Activated T-helper 1 cell treated with anti-CD3 and anti-CD28 coated beads, Interleukin-12 subunit alpha, Interleukin-12 subunit beta, Interleukin-2, Interleukin-4 antibody, amounts not matched to agents 30 ng/mL and 10 ng/mL and 1 ng/mL, durations not matched to agents 14 hours and 24 hours and 36 hours (primary cell): ENCODE measurements at regions of chr3 and their contacts with region 1.

Region 1: GRCh38 chr3:190424478-190425439 is 24.9 kb downstream of the TMEM207 start:
- DNase-seq: no peak
- H3K4me3 Mint-ChIP-seq: no peak overlapping the region
- H3K27ac Mint-ChIP-seq: no peak overlapping the region
- H3K4me1 Mint-ChIP-seq: no peaks in the 10 kb centered on the region
- H3K27me3 Mint-ChIP-seq: peaks cover 6% of the 10 kb centered on the region

Region 2: GRCh38 chr3:189967254-189967865 is 457.4 kb before region 1 on chr3:
- intact Hi-C with region 1: loop called (anchors 1 kb)
- DNase-seq: no peak
- H3K4me3 Mint-ChIP-seq: no peak overlapping the region
- H3K27ac Mint-ChIP-seq: no peak overlapping the region
- H3K4me1 Mint-ChIP-seq: peaks cover 8% of the 10 kb centered on the region
- H3K27me3 Mint-ChIP-seq: peaks cover 7% of the 10 kb centered on the region

Region 3: GRCh38 chr3:190064112-190064511 is 360.6 kb before region 1 on chr3:
- intact Hi-C with region 1: no loop called
- DNase-seq: no peak
- H3K4me3 Mint-ChIP-seq: no peak overlapping the region
- H3K27ac Mint-ChIP-seq: no peak overlapping the region
- H3K4me1 Mint-ChIP-seq: no peaks in the 10 kb centered on the region
- H3K27me3 Mint-ChIP-seq: no peaks in the 10 kb centered on the region

Region 4: DNA sequence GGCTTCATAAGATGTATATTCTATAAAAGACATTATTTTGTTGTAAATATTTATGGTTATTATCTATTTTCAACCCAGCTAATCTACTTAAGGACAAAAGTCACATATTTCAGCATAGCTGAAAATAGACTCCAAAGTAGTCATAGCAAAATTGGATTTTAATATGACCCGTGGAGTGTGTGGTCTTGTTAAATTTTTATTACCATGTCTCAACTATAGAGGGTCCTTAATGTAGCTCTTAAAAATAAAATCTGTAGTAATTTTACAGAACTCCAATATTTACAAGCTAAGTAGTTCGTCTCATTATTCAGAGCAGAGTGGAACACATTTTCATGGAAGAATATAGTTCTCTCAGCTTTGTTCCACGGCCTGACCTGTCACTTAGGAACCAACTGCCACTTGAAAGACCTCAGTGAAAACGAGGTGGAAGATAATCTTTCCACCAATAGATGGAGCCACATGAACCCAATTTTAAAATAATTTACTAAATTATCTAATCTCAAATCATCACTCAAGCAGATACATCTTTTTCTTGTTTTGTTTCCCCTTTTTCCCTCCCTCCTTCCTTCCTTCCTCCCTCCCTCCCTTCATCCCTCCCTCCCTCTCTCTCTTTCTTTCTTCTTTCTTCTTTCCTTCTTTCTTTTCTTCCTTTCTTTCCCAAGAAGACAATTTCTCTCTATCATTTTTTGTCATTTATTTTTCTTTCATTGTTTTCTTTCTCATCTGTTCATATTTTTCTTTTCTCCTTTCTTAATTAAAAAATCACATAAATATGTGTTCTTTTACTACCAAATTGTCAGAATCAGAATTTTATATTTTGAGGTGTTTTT is 199.7 kb before region 1 on chr3:
- intact Hi-C with region 1: loop called (anchors 1 kb)
- DNase-seq: no peak
- H3K4me3 Mint-ChIP-seq: no peak overlapping the region
- H3K27ac Mint-ChIP-seq: no peak overlapping the region
- H3K4me1 Mint-ChIP-seq: no peaks in the 10 kb centered on the region
- H3K27me3 Mint-ChIP-seq: peaks cover 2% of the 10 kb centered on the region